K562 (cell line): ENCODE measurements at regions of chr10 and their contacts with region 1.

Region 1: GRCh38 chr10:5479481-5480161 is 19.7 kb downstream of the CALML5 start:
- DNase-seq: peak; percentile 81 to 95 (median 87)
- ATAC-seq: peak; percentile 62
- H3K4me3 ChIP-seq: peak overlapping the region; percentile 47
- H3K27ac ChIP-seq: peak overlapping the region; percentile 94
- H3K4me1 ChIP-seq: peaks cover 48 to 49% of the 10 kb centered on the region in 2 experiments
- H3K27me3 ChIP-seq: no peaks in the 10 kb centered on the region
- CTCF ChIP-seq: no peak
- EP300 ChIP-seq: peak; percentile 94
- POLR2A ChIP-seq: peak; percentile 70
- RAD21 ChIP-seq: peak in 1 of 2 experiments; percentile 27; a peak in 1 of 4 replicates

Region 2: DNA sequence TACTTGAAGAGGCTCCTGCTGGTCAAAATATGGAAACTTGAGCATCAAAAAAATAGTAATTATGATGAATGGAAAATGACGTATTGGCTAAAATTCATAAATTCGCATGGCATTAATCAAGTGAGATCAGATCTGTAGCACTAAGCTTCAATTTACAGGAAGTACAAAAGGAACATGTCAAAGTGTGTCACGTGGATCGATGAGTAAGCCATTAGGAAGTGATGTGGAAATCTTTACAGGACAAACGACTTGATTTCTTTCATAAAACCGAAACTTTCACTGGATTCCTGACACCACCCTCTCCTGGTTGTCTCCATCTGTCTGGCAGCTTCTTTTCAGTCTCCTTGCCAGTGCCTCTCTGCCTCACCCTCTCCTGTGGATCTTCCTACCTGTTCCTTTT is 320.5 kb before region 1 on chr10:
- CTCF ChIA-PET with region 1: no interaction called
- POLR2A ChIA-PET with region 1: no interaction called
- in situ Hi-C with region 1: no loop called
- intact Hi-C with region 1: no loop called
- DNase-seq: no peak
- ATAC-seq: no peak
- H3K4me3 ChIP-seq: no peak overlapping the region
- H3K27ac ChIP-seq: no peak overlapping the region
- H3K4me1 ChIP-seq: no peaks in the 10 kb centered on the region
- H3K27me3 ChIP-seq: no peaks in the 10 kb centered on the region
- CTCF ChIP-seq: no peak
- EP300 ChIP-seq: no peak
- POLR2A ChIP-seq: no peak
- RAD21 ChIP-seq: no peak

Region 3: GRCh38 chr10:5446390-5446926 is 33.2 kb before region 1 on chr10:
- CTCF ChIA-PET with region 1: no interaction called
- POLR2A ChIA-PET with region 1: interaction called, 3 read pairs
- in situ Hi-C with region 1: no loop called
- intact Hi-C with region 1: loop called (anchors 1 kb)
- DNase-seq: peak; percentile 97 to 98 (median 97)
- ATAC-seq: peak; percentile 87
- H3K4me3 ChIP-seq: peak overlapping the region; percentile 56
- H3K27ac ChIP-seq: peak overlapping the region; percentile 74
- H3K4me1 ChIP-seq: peaks cover 4 to 23% of the 10 kb centered on the region in 2 experiments
- H3K27me3 ChIP-seq: no peaks in the 10 kb centered on the region
- CTCF ChIP-seq: no peak
- EP300 ChIP-seq: no peak
- POLR2A ChIP-seq: peak; percentile 98
- RAD21 ChIP-seq: peak; percentile 29 to 31; a peak in 3 of 4 replicates

Region 4: GRCh38 chr10:5466418-5467154 is 13.0 kb before region 1 on chr10:
- CTCF ChIA-PET with region 1: no interaction called
- POLR2A ChIA-PET with region 1: interaction called, 43 read pairs
- in situ Hi-C with region 1: no loop called
- intact Hi-C with region 1: loop called (anchors 2 kb)
- DNase-seq: peak; percentile 62 to 76 (median 72)
- ATAC-seq: peak; percentile 77
- H3K4me3 ChIP-seq: no peak overlapping the region
- H3K27ac ChIP-seq: peak overlapping the region; percentile 63
- H3K4me1 ChIP-seq: peaks cover 54 to 66% of the 10 kb centered on the region in 2 experiments
- H3K27me3 ChIP-seq: no peaks in the 10 kb centered on the region
- CTCF ChIP-seq: no peak
- EP300 ChIP-seq: no peak
- POLR2A ChIP-seq: no peak; the same call in 1 of the 2 replicates
- RAD21 ChIP-seq: no peak

Region 5: DNA sequence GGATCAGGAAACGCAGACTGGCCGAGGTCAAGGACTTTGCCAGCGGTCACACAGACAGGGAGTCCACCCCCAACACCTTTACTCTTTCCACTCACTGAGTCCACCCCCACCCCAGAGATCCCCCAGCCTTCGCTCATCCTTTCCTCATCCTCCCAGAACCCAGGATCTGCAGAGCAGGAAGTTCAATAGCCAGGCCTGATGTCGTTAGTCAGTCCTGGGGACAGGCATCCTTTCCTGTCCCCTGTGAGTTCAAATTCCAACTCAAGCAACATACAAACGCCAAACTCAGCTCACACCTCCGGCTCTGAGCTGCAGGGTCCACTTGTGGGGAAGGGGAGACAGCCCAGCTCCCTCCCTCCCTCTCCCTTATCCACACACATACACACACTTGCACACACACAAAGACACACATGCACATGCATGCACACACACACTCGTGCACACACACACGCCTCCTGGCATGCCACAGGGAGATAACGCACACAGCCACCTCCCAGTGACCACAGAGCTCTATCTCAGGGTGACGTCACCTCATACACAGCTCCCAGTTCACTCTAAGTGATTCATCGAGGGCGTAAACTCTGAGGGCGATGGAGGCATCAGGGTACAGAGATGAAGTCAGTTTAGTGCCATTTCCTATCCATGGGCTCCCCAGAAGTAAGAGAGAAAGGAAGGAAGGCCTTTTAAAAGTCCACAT is 69.1 kb after region 1 on chr10:
- CTCF ChIA-PET with region 1: no interaction called
- POLR2A ChIA-PET with region 1: interaction called, 3 read pairs
- in situ Hi-C with region 1: no loop called
- intact Hi-C with region 1: loop called (anchors 5 kb)
- DNase-seq: peak; percentile 92 to 95 (median 93)
- ATAC-seq: peak; percentile 91
- H3K4me3 ChIP-seq: no peak overlapping the region
- H3K27ac ChIP-seq: peak overlapping the region; percentile 68
- H3K4me1 ChIP-seq: peaks cover 60 to 77% of the 10 kb centered on the region in 2 experiments
- H3K27me3 ChIP-seq: no peaks in the 10 kb centered on the region
- CTCF ChIP-seq: no peak
- EP300 ChIP-seq: peak; percentile 83
- POLR2A ChIP-seq: no peak
- RAD21 ChIP-seq: peak in 1 of 2 experiments; percentile 14; a peak in 2 of 4 replicates